ENCODE measurements at regions of chr1 and their contacts with region 1.

Region 1: DNA sequence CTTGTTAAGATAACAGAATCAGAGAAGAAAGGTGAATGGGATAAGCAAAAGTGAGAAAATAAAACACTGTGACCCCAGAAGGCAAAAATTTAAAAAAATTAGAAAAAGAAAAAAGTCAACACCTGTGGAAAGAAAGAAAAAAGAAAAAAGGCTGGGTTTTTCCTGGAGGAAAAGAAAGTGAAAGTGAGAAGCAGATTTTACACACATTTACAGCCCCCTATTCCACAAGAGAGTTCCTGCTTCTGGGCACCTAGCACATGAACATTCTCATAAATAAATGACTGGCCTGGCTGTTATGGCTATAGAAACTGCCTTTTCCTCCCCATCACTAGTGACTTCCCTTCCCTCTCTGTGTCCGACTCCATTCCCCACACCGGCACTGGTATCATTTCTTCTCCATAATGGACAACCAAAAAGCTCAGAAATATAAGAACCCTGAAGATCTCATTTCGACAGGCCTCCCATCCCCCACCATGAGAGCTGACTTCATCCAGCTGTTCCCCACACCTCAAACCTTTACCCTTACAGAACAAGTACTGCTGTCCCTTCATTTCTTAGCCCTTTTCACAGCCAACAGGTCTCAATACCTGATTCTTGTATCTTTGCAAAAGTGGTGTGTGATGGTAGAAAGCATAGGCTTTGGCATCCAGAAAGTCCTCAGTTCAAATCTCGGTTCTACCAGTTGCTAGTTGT is 12.6 kb downstream of the MTF1 start:
- DNase-seq: no peak
- H3K4me3 ChIP-seq: no peak overlapping the region
- H3K27ac ChIP-seq: no peak overlapping the region
- H3K4me1 ChIP-seq: no peaks in the 10 kb centered on the region
- H3K27me3 ChIP-seq: no peaks in the 10 kb centered on the region
- CTCF ChIP-seq: no peak
- POLR2A ChIP-seq: no peak

Region 2: GRCh38 chr1:37561133-37562132 is 285.4 kb before region 1 on chr1:
- intact Hi-C with region 1: loop called (anchors 5 kb)
- DNase-seq: no peak
- H3K4me3 ChIP-seq: no peak overlapping the region
- H3K27ac ChIP-seq: no peak overlapping the region
- H3K4me1 ChIP-seq: peaks cover 2 to 3% of the 10 kb centered on the region in 2 donors
- H3K27me3 ChIP-seq: no peaks in the 10 kb centered on the region
- CTCF ChIP-seq: peak; percentile 21 to 40 (median 24)
- POLR2A ChIP-seq: no peak

Region 3: GRCh38 chr1:39214998-39215873 is 1368.4 kb after region 1 on chr1:
- intact Hi-C with region 1: loop called (anchors 10 kb)
- DNase-seq: no peak
- H3K4me3 ChIP-seq: peak overlapping the region; percentile 5 to 12 (median 6)
- H3K27ac ChIP-seq: peak overlapping the region; percentile 66 to 86
- H3K4me1 ChIP-seq: peaks cover 0 to 10% of the 10 kb centered on the region in 2 donors
- H3K27me3 ChIP-seq: no peaks in the 10 kb centered on the region
- CTCF ChIP-seq: no peak
- POLR2A ChIP-seq: no peak

Measured in breast epithelium (tissue), 4 donors.